Testis (tissue), 5 donors: ENCODE measurements at regions of chr9 and their contacts with region 1.

Region 1: DNA sequence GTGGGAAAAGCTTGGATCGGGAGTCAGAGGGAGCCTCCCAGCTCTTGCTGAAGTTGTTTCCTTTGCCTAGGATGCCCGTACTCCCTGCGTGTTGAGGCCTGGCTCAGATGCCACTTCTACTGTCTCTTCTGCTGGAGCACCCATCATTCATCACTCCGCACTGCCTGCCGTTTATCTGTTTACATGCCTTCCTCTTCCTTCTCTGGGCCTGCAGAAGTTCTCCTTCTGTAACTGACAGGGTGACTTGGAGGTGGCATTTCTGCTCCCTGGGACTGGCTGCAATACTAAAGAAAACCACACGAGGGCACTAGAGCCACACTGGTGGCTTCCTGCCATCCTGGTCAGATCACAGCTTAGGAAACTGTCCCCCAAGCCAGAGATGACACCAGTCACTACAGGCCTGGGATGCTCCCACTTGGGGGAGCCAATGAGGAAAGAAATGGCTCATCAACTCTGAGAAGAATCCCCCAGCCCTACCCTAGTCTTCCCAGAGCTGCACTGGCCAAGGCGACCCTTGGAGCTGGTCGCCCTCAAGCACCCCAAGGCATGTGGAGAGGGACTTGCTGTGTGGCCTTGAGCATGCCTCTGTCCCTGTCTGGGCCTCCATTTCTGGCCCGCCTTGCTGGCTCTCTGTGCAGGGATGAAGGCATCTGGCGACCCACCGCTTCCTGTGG is 9.7 kb upstream of the SLC25A51 start:
- DNase-seq: peak; percentile 84
- H3K4me3 ChIP-seq: no peak overlapping the region
- H3K27ac ChIP-seq: no peak overlapping the region
- H3K4me1 ChIP-seq: peaks cover 5% of the 10 kb centered on the region
- H3K27me3 ChIP-seq: no peaks in the 10 kb centered on the region
- CTCF ChIP-seq: peak; percentile 82 to 97 (median 90)
- POLR2A ChIP-seq: no peak

Region 2: GRCh38 chr9:38068866-38069629 is 155.4 kb after region 1 on chr9 and contains the start of gene SHB:
- intact Hi-C with region 1: loop called (anchors 10 kb)
- DNase-seq: peak; percentile 82
- H3K4me3 ChIP-seq: peak within 1 kb of the TSS; percentile 69 to 72
- H3K27ac ChIP-seq: peak within 1 kb of the TSS; percentile 72 to 83
- H3K4me1 ChIP-seq: no peaks in the 10 kb centered on the region
- H3K27me3 ChIP-seq: no peaks in the 10 kb centered on the region
- CTCF ChIP-seq: peak in 1 of 3 experiments; percentile 22
- POLR2A ChIP-seq: no peak
- total RNA-seq, gene SHB: 21.2 to 22.3 TPM